Activated B cell treated with CpG ODN at 0.5 μM for 24 hours (primary cell): ENCODE measurements at regions of chr9 and their contacts with region 1.

Region 1: GRCh38 chr9:21974548-21975409 is 19.4 kb downstream of the CDKN2A start:
- DNase-seq: peak; percentile 39
- ATAC-seq: peak; percentile 59
- H3K4me3 Mint-ChIP-seq: peak overlapping the region; percentile 78
- H3K27ac Mint-ChIP-seq: peak overlapping the region; percentile 42
- H3K4me1 Mint-ChIP-seq: peaks cover 21% of the 10 kb centered on the region
- H3K27me3 Mint-ChIP-seq: peaks cover 72% of the 10 kb centered on the region
- CTCF ChIP-seq: no peak

Region 2: GRCh38 chr9:21985964-21986667 is 11.3 kb after region 1 on chr9:
- CTCF ChIA-PET with region 1: interaction called, 3 read pairs
- POLR2A ChIA-PET with region 1: interaction called, 3 read pairs
- intact Hi-C with region 1: loop called (anchors 1 kb)
- DNase-seq: no peak
- ATAC-seq: no peak
- H3K4me3 Mint-ChIP-seq: no peak overlapping the region
- H3K27ac Mint-ChIP-seq: no peak overlapping the region
- H3K4me1 Mint-ChIP-seq: peaks cover 4% of the 10 kb centered on the region
- H3K27me3 Mint-ChIP-seq: peaks cover 49% of the 10 kb centered on the region
- CTCF ChIP-seq: no peak

Region 3: GRCh38 chr9:22079873-22080341 is 105.1 kb after region 1 on chr9:
- CTCF ChIA-PET with region 1: no interaction called
- POLR2A ChIA-PET with region 1: no interaction called
- intact Hi-C with region 1: no loop called
- DNase-seq: no peak
- ATAC-seq: peak; percentile 28
- H3K4me3 Mint-ChIP-seq: no peak overlapping the region
- H3K27ac Mint-ChIP-seq: no peak overlapping the region
- H3K4me1 Mint-ChIP-seq: peaks cover 15% of the 10 kb centered on the region
- H3K27me3 Mint-ChIP-seq: no peaks in the 10 kb centered on the region
- CTCF ChIP-seq: no peak

Region 4: DNA sequence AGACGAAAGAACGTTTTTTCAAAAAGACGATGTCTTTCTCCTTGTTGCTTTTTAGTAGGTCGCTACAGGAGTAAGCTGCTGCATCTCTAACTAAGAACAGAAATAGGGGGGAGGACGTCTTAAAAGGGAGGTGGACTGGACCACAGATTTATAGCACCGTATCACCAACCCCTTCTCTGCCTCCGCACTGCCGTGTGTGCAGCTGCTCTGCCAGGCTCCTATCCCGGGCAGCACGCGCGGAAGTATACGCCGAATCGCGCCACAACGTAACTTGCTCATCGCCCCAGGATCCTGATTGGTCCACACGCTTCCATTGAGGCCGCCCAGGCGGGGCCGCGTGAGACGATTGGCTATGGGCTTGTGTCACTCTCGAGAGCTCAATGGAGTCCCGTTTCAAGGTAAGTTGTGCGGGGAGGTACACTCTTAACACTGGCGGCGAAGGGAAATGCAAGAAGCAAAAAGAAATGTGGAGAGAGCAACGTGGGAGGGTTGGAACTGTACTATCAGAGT is 1851.4 kb after region 1 on chr9 and contains the start of gene ELAVL2:
- CTCF ChIA-PET with region 1: no interaction called
- POLR2A ChIA-PET with region 1: no interaction called
- intact Hi-C with region 1: loop called (anchors 10 kb)
- DNase-seq: no peak
- ATAC-seq: peak; percentile 25
- H3K4me3 Mint-ChIP-seq: no peak within 1 kb of the TSS
- H3K27ac Mint-ChIP-seq: no peak within 1 kb of the TSS
- H3K4me1 Mint-ChIP-seq: no peaks in the 10 kb centered on the region
- H3K27me3 Mint-ChIP-seq: peaks cover 31% of the 10 kb centered on the region
- CTCF ChIP-seq: no peak
- total RNA-seq, gene ELAVL2: not detected in 2 replicates